Naive thymus-derived CD4-positive, alpha-beta T cell (primary cell): ENCODE measurements at regions of chr4 and their contacts with region 1.

Region 1: DNA sequence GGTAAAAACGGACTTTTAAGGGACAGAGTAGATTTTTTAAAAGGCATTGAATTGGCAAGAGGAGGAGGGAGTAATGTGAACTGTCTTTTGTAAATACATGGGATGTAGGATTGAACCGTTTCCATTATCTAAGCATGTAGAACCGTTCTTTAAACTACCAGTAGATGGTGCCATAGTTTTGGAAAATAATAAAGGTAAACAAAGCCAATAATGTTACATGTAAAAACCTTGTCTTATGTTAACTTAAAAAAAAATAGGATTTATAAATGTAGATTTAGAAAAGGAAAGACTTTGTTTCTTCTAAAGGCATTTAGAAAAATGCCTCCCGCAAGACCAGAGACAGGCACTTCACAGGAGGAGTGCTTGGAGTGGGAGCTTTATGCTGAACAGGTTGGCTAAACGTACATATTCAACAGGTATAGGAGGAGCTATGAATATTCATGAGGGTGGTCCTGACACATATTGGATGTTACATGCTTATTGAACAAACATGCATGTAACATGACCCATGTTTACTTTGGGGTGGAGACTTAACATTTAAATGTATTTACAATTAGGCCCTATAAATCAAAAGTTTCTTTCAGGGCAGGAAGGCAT is 45.5 kb upstream of the FAM241A start:
- DNase-seq: peak in 7 of 9 donors; percentile 15 to 58 (median 41)
- ATAC-seq: peak; percentile 72
- H3K4me3 ChIP-seq: no peak overlapping the region
- H3K4me3 Mint-ChIP-seq: no peak overlapping the region
- H3K27ac ChIP-seq: no peak overlapping the region
- H3K27ac Mint-ChIP-seq: peak overlapping the region in 1 of 9 donors; percentile 25
- H3K4me1 ChIP-seq: no peaks in the 10 kb centered on the region
- H3K4me1 Mint-ChIP-seq: peaks cover 0 to 13% (median 0%) of the 10 kb centered on the region in 7 donors
- H3K27me3 ChIP-seq: no peaks in the 10 kb centered on the region
- H3K27me3 Mint-ChIP-seq: peaks cover 4 to 29% (median 10%) of the 10 kb centered on the region in 5 donors

Region 2: DNA sequence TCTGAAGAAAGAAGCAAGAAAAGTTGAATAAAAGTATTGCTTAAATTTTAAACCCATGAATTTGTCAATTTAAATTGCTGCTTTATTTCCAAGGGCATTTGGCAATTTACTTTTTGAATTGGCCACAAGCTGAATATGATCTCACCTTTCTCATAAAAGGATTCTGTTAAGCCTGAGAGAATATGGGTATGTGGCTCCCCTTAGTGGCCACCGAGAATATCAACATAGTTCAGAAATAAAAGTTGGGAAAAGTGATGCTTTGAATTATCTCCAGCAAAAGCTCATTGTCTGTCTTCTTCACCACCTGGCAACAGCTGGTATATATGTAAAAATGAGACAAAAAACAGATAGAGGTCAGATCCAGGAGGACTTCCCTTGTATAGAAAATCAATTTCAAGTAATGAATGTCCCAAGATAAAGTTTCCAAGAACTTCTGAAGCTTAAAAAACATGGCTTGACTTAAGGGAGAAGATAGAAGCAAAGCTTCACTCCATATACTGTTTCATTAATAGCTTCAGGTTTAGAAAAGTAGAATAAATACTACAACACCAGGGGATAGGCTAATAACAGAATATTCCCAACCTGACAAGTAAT is 245.2 kb before region 1 on chr4:
- CTCF ChIA-PET with region 1: no interaction called
- POLR2A ChIA-PET with region 1: no interaction called
- intact Hi-C with region 1: no loop called
- DNase-seq: no peak
- ATAC-seq: no peak
- H3K4me3 ChIP-seq: no peak overlapping the region
- H3K4me3 Mint-ChIP-seq: no peak overlapping the region
- H3K27ac ChIP-seq: no peak overlapping the region
- H3K27ac Mint-ChIP-seq: no peak overlapping the region
- H3K4me1 ChIP-seq: no peaks in the 10 kb centered on the region
- H3K4me1 Mint-ChIP-seq: no peaks in the 10 kb centered on the region
- H3K27me3 ChIP-seq: no peaks in the 10 kb centered on the region
- H3K27me3 Mint-ChIP-seq: no peaks in the 10 kb centered on the region

Region 3: GRCh38 chr4:112058433-112058832 is 41.4 kb before region 1 on chr4:
- CTCF ChIA-PET with region 1: no interaction called
- POLR2A ChIA-PET with region 1: no interaction called
- intact Hi-C with region 1: no loop called
- DNase-seq: no peak
- ATAC-seq: no peak
- H3K4me3 ChIP-seq: no peak overlapping the region
- H3K4me3 Mint-ChIP-seq: no peak overlapping the region
- H3K27ac ChIP-seq: no peak overlapping the region
- H3K27ac Mint-ChIP-seq: no peak overlapping the region
- H3K4me1 ChIP-seq: no peaks in the 10 kb centered on the region
- H3K4me1 Mint-ChIP-seq: peaks cover 0 to 6% (median 0%) of the 10 kb centered on the region in 7 donors
- H3K27me3 ChIP-seq: peaks cover 0 to 4% of the 10 kb centered on the region in 2 donors
- H3K27me3 Mint-ChIP-seq: peaks cover 0 to 16% (median 10%) of the 10 kb centered on the region in 5 donors

Region 4: DNA sequence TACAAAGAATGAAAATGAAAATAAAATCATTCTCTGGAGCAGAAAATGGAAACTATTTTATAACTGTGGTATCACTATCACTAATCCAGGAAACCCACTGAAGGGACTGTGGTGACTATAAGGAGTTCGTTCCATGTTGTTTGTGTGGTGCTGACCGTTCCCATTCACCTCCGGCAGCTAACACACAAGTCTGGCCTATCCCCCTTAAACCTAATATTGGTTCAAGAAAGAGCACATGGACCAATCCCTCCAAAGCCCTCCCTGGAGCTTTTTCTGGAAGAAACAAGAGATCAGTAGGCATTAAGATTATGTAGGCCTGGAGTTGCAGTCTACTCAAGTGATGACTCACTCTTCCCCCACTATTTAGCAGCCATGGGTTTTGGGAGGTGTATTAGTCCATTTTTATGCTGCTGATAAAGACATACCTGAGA is 19.6 kb after region 1 on chr4:
- CTCF ChIA-PET with region 1: no interaction called
- POLR2A ChIA-PET with region 1: no interaction called
- intact Hi-C with region 1: loop called in 1 of 2 experiments (anchors 1 kb)
- DNase-seq: peak in 1 of 9 donors; percentile 41
- ATAC-seq: no peak
- H3K4me3 ChIP-seq: no peak overlapping the region
- H3K4me3 Mint-ChIP-seq: peak overlapping the region in 1 of 10 donors; percentile 65
- H3K27ac ChIP-seq: no peak overlapping the region
- H3K27ac Mint-ChIP-seq: peak overlapping the region in 1 of 9 donors; percentile 94
- H3K4me1 ChIP-seq: no peaks in the 10 kb centered on the region
- H3K4me1 Mint-ChIP-seq: peaks cover 2 to 17% (median 11%) of the 10 kb centered on the region in 7 donors
- H3K27me3 ChIP-seq: no peaks in the 10 kb centered on the region
- H3K27me3 Mint-ChIP-seq: peaks cover 0 to 14% (median 6%) of the 10 kb centered on the region in 5 donors

Region 5: DNA sequence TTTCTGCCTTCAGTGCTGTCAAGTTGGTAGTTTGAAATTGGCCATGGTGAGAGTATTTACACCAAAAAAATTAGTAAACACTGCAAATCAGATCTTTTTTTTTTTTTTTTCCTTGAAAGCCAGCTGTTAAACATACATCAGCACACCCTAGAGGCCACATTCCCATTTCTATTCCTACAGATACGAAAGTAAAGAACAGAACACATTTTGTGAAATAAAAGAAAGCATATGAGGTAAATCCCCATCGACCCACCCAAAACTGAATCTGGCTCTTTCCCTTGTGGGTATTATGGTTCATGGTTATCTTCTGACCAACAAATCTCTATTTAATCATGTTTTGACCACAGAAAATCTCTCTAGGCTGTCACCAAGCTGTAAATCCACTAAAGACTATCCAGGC is 90.0 kb after region 1 on chr4:
- CTCF ChIA-PET with region 1: interaction called, 3 read pairs
- POLR2A ChIA-PET with region 1: no interaction called
- intact Hi-C with region 1: loop called in 1 of 2 experiments (anchors 1 kb)
- DNase-seq: no peak
- ATAC-seq: no peak
- H3K4me3 ChIP-seq: no peak overlapping the region
- H3K4me3 Mint-ChIP-seq: no peak overlapping the region
- H3K27ac ChIP-seq: no peak overlapping the region
- H3K27ac Mint-ChIP-seq: no peak overlapping the region
- H3K4me1 ChIP-seq: no peaks in the 10 kb centered on the region
- H3K4me1 Mint-ChIP-seq: peaks cover 0 to 8% (median 0%) of the 10 kb centered on the region in 7 donors
- H3K27me3 ChIP-seq: no peaks in the 10 kb centered on the region
- H3K27me3 Mint-ChIP-seq: no peaks in the 10 kb centered on the region

Region 6: GRCh38 chr4:112266821-112267220 is 167.0 kb after region 1 on chr4:
- CTCF ChIA-PET with region 1: interaction called, 3 read pairs
- POLR2A ChIA-PET with region 1: no interaction called
- intact Hi-C with region 1: loop called in 1 of 2 experiments (anchors 1 kb)
- DNase-seq: peak in 2 of 9 donors; percentile 11 to 24
- ATAC-seq: peak; percentile 45
- H3K4me3 ChIP-seq: no peak overlapping the region
- H3K4me3 Mint-ChIP-seq: no peak overlapping the region
- H3K27ac ChIP-seq: no peak overlapping the region
- H3K27ac Mint-ChIP-seq: peak overlapping the region in 1 of 9 donors; percentile 22
- H3K4me1 ChIP-seq: no peaks in the 10 kb centered on the region
- H3K4me1 Mint-ChIP-seq: peaks cover 0 to 17% (median 0%) of the 10 kb centered on the region in 7 donors
- H3K27me3 ChIP-seq: no peaks in the 10 kb centered on the region
- H3K27me3 Mint-ChIP-seq: no peaks in the 10 kb centered on the region

Region 7: DNA sequence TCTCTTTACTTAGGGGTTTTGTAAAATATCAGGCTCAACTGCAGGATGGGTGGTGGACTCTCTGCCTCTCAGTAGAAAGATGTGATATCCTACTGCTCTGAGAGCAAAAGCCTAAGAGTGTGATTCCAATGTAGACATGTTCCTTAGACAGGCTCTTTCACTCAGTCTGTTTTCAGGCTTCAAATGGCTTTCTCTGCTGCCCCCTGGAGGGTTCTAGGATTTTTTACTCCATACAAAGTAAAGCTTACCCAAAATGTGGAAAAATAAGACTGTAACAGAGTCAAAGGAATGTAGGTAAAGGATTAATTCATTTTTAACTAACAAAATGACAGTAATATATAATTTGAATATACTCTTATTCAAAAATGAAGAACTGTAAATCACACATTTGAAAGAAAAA is 504.8 kb after region 1 on chr4:
- CTCF ChIA-PET with region 1: interaction called, 6 read pairs
- POLR2A ChIA-PET with region 1: no interaction called
- intact Hi-C with region 1: loop called (anchors 1 kb)
- DNase-seq: peak in 7 of 9 donors; percentile 14 to 44 (median 35)
- ATAC-seq: peak; percentile 73
- H3K4me3 ChIP-seq: no peak overlapping the region
- H3K4me3 Mint-ChIP-seq: no peak overlapping the region
- H3K27ac ChIP-seq: no peak overlapping the region
- H3K27ac Mint-ChIP-seq: no peak overlapping the region
- H3K4me1 ChIP-seq: no peaks in the 10 kb centered on the region
- H3K4me1 Mint-ChIP-seq: no peaks in the 10 kb centered on the region
- H3K27me3 ChIP-seq: no peaks in the 10 kb centered on the region
- H3K27me3 Mint-ChIP-seq: no peaks in the 10 kb centered on the region

Region 8: GRCh38 chr4:112938461-112939058 is 838.8 kb after region 1 on chr4:
- CTCF ChIA-PET with region 1: no interaction called
- POLR2A ChIA-PET with region 1: no interaction called
- intact Hi-C with region 1: loop called in 1 of 2 experiments (anchors 5 kb)
- DNase-seq: peak in 3 of 9 donors; percentile 3 to 14 (median 4)
- ATAC-seq: no peak
- H3K4me3 ChIP-seq: no peak overlapping the region
- H3K4me3 Mint-ChIP-seq: no peak overlapping the region
- H3K27ac ChIP-seq: no peak overlapping the region
- H3K27ac Mint-ChIP-seq: no peak overlapping the region
- H3K4me1 ChIP-seq: no peaks in the 10 kb centered on the region
- H3K4me1 Mint-ChIP-seq: no peaks in the 10 kb centered on the region
- H3K27me3 ChIP-seq: no peaks in the 10 kb centered on the region
- H3K27me3 Mint-ChIP-seq: peaks cover 9 to 26% (median 23%) of the 10 kb centered on the region in 5 donors